ENCODE measurements at regions of chr17 and their contacts with region 1.

Region 1: DNA sequence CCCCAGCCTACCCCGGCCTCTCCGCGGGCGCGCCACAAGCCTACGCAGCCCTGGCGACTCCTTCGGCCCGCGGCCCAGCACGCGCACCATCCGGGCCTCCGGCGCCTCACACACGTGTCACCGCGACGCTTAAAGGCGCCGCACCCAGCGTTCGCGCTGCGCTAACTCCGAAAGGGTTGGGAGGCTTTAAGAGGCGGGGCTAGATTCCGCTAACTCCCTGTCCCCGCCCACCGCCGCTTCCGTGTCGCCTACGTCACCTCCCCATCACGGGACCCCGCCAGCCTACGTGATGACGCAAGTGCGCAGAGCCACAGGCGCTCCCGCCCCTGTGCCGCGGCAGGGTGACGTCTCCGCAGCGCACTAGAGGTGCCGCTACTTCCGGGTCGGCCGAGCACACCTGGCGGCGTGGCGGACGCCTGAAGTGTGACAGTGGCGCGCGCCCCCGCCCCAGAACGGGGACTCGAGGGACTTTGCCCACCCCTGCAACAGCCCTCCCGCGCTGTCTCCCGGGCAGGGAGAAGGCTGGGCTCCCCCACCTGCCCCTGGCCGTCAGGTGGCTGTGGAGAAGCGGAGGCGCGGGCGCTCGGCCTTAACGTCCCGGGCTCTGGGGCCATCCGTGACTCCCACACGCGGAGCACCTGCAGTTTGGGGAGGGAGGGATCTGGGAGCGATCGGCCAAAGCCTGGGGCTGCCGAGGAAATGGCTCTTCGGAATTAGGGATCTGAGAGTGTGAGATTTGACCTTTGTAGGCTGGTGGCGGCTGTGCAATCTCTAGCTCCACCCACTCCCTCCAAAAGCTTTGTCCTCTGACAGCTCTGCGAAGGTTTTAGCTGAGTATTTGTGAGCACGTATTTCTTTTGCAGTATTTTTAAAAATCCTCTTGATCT is at the start of gene USP36:
- DNase-seq: peak; percentile 100
- ATAC-seq: peak; percentile 85
- H3K4me3 ChIP-seq: peak within 1 kb of the TSS; percentile 74 to 85 (median 83)
- H3K4me3 Mint-ChIP-seq: peak within 1 kb of the TSS; percentile 91
- H3K27ac ChIP-seq: peak within 1 kb of the TSS; percentile 99 to 100
- H3K27ac Mint-ChIP-seq: peak within 1 kb of the TSS; percentile 98
- H3K4me1 ChIP-seq: peaks cover 21 to 24% of the 10 kb centered on the region in 2 donors
- H3K4me1 Mint-ChIP-seq: peaks cover 37% of the 10 kb centered on the region
- H3K27me3 ChIP-seq: no peaks in the 10 kb centered on the region
- H3K27me3 Mint-ChIP-seq: no peaks in the 10 kb centered on the region
- CTCF ChIP-seq: no peak
- total RNA-seq, gene USP36: 137 and 145 TPM in 2 replicates

Region 2: DNA sequence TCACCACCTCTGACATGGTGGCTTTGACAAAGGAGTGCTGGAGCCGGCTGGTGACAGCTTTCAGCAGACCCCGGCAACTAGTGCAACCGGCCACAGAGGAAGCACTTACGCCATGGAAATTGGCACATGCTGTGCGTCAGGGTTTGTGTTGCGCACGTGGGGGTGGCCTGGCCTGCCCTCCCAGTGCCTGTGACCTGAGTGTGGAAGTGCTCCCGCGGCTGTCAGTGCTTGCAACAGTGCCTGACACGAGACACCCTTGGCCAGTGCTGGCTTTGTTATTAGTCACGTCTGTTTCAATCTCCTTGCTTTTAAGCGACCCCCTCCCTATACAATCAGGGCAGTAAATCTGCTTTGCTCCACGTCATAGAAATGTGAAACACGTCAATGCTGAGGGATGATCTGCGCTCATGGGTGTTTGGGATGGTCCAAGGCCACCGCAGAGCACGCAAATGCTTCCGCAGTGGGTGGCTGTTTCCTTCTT is 398.3 kb before region 1 on chr17:
- CTCF ChIA-PET with region 1: no interaction called
- POLR2A ChIA-PET with region 1: no interaction called
- intact Hi-C with region 1: loop called (anchors 10 kb)
- DNase-seq: no peak
- ATAC-seq: no peak
- H3K4me3 ChIP-seq: no peak overlapping the region
- H3K4me3 Mint-ChIP-seq: no peak overlapping the region
- H3K27ac ChIP-seq: no peak overlapping the region
- H3K27ac Mint-ChIP-seq: no peak overlapping the region
- H3K4me1 ChIP-seq: no peaks in the 10 kb centered on the region
- H3K4me1 Mint-ChIP-seq: no peaks in the 10 kb centered on the region
- H3K27me3 ChIP-seq: peaks cover 0 to 4% (median 0%) of the 10 kb centered on the region in 4 experiments
- H3K27me3 Mint-ChIP-seq: peaks cover 8% of the 10 kb centered on the region
- CTCF ChIP-seq: no peak

Region 3: DNA sequence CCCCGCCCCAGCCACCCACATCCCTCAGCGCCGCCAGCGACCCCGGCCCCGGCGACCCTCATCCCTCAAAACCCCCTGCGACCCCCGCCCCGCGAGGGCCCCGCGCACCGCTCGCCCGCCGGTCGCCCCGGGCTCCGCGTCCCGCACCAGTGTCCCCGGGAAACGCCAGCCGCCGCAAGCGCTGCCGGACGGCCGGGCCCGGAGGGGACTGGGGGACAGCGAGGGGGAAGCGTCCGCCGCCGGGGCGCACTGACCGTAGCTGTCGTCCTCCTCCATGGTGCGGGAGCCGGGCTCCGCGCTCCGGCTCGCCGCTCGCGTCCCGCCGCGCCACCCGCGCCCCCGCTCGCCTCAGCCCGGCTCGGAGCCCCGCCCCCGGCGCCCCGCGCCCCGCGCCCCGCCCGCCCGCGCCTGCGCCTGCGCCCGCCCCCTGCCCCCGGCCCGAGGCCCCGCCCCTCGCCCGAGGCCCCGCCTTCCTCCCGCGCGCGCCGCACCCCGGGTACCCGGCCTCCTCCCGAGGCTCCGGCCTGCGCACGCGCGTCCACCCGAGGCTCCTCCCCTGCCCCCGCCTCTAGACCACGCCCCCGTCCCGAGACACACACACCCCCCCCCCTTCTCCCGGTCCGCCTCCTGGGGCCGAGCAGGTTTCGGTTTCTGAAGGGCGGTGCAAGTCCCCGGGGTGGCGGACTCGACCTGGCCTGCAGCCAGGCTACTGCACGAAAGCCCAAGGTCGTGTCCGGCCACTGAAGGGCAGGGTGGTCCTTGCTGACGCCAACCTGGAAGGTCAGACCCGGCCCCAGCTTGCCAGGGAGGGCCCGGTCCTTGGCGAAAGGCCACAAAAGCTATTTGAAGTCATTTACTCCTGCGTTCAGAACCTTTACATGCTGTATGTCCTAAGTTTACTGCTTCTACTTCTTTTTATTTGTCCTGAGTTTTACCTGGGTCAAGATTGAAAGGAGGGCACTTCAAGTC is 58.7 kb before region 1 on chr17 and contains the start of gene CYTH1:
- CTCF ChIA-PET with region 1: no interaction called
- POLR2A ChIA-PET with region 1: interaction called, 6 read pairs
- intact Hi-C with region 1: loop called (anchors 1 kb)
- DNase-seq: peak; percentile 96
- ATAC-seq: peak; percentile 83
- H3K4me3 ChIP-seq: peak within 1 kb of the TSS; percentile 78 to 95 (median 89)
- H3K4me3 Mint-ChIP-seq: peak within 1 kb of the TSS; percentile 88
- H3K27ac ChIP-seq: peak within 1 kb of the TSS; percentile 86 to 88
- H3K27ac Mint-ChIP-seq: peak within 1 kb of the TSS; percentile 96
- H3K4me1 ChIP-seq: peaks cover 33 to 44% of the 10 kb centered on the region in 2 donors
- H3K4me1 Mint-ChIP-seq: peaks cover 36% of the 10 kb centered on the region
- H3K27me3 ChIP-seq: no peaks in the 10 kb centered on the region
- H3K27me3 Mint-ChIP-seq: no peaks in the 10 kb centered on the region
- CTCF ChIP-seq: no peak
- total RNA-seq, gene CYTH1: 353 and 368 TPM in 2 replicates

Region 4: DNA sequence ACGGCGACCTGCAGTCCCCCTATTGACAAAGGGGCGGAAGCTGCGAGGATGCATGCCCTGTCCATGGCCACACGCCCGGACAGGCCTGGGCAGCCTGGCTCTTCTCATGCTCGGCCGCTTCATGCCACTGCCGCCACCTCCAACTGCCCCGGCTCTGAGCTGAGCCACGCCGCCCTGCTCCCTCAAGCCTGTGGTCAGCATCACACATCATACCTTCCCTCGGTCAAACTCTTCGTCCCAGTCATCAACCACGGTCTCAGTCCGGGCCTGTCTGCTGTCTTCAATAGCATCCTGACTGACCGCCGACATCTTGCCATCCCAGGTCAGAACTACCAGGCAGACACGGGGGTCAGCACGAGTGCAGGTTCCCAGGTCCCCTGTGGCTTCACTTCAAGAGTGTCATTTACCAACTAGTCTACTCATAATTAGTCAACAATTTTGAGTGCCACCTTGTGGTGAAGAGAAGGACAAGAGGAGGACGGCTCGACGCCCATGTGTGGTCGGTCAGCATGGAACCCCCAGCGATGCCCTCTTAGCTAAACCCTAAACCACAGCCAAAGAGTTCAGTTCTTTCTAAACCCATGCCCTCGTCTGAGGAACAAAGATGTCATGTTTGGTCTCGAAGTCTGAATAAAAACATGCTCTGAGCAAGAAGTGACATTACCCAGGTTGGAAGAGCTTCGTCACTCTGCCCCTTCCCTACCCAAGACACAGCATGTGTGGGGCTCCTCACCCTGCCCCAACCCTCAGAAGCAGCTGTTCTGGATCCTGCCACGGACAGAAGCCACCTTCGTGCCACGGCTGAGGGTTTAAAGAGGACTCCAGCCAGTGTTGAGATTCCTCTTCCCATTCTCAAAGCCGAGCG is 42.0 kb before region 1 on chr17:
- CTCF ChIA-PET with region 1: no interaction called
- POLR2A ChIA-PET with region 1: no interaction called
- intact Hi-C with region 1: no loop called
- DNase-seq: peak; percentile 68
- ATAC-seq: peak; percentile 56
- H3K4me3 ChIP-seq: no peak overlapping the region
- H3K4me3 Mint-ChIP-seq: no peak overlapping the region
- H3K27ac ChIP-seq: no peak overlapping the region
- H3K27ac Mint-ChIP-seq: peak overlapping the region; percentile 57
- H3K4me1 ChIP-seq: peaks cover 6 to 8% of the 10 kb centered on the region in 2 donors
- H3K4me1 Mint-ChIP-seq: peaks cover 12% of the 10 kb centered on the region
- H3K27me3 ChIP-seq: no peaks in the 10 kb centered on the region
- H3K27me3 Mint-ChIP-seq: no peaks in the 10 kb centered on the region
- CTCF ChIP-seq: peak; percentile 59

Region 5: GRCh38 chr17:78890498-78890897 is 49.5 kb after region 1 on chr17:
- CTCF ChIA-PET with region 1: no interaction called
- POLR2A ChIA-PET with region 1: no interaction called
- intact Hi-C with region 1: loop called (anchors 1 kb)
- DNase-seq: peak; percentile 82
- ATAC-seq: peak; percentile 64
- H3K4me3 ChIP-seq: peak overlapping the region in 3 of 5 experiments; percentile 5 to 71 (median 56)
- H3K4me3 Mint-ChIP-seq: peak overlapping the region; percentile 72
- H3K27ac ChIP-seq: peak overlapping the region; percentile 93 to 96
- H3K27ac Mint-ChIP-seq: peak overlapping the region; percentile 93
- H3K4me1 ChIP-seq: peaks cover 41 to 53% of the 10 kb centered on the region in 2 donors
- H3K4me1 Mint-ChIP-seq: peaks cover 58% of the 10 kb centered on the region
- H3K27me3 ChIP-seq: no peaks in the 10 kb centered on the region
- H3K27me3 Mint-ChIP-seq: no peaks in the 10 kb centered on the region
- CTCF ChIP-seq: no peak